GM12878 (cell line): ENCODE measurements at regions of chr10 and their contacts with region 1.

Region 1: GRCh38 chr10:122342293-122343134 is 32.0 kb upstream of the PLEKHA1 start:
- DNase-seq: no peak
- ATAC-seq: peak; percentile 74
- H3K4me3 ChIP-seq: no peak overlapping the region
- H3K27ac ChIP-seq: no peak overlapping the region
- H3K4me1 ChIP-seq: no peaks in the 10 kb centered on the region; the same call in 1 of the 2 replicates
- H3K27me3 ChIP-seq: peaks cover 0 to 6% of the 10 kb centered on the region in 2 experiments; a peak in 2 of 4 replicates
- CTCF ChIP-seq: peak; percentile 58 to 63 (median 62)
- EP300 ChIP-seq: no peak
- POLR2A ChIP-seq: no peak
- RAD21 ChIP-seq: peak; percentile 70

Region 2: GRCh38 chr10:122078965-122079795 is 263.3 kb before region 1 on chr10:
- CTCF ChIA-PET with region 1: no interaction called
- POLR2A ChIA-PET with region 1: no interaction called
- RAD21 ChIA-PET with region 1: no interaction called
- SMC1A ChIA-PET with region 1: no interaction called
- in situ Hi-C with region 1: no loop called
- intact Hi-C with region 1: no loop called
- DNase-seq: no peak
- ATAC-seq: no peak
- H3K4me3 ChIP-seq: no peak overlapping the region
- H3K27ac ChIP-seq: no peak overlapping the region
- H3K4me1 ChIP-seq: no peaks in the 10 kb centered on the region
- H3K27me3 ChIP-seq: no peaks in the 10 kb centered on the region; a peak in 1 of 4 replicates
- CTCF ChIP-seq: no peak
- EP300 ChIP-seq: no peak
- POLR2A ChIP-seq: no peak
- RAD21 ChIP-seq: no peak

Region 3: GRCh38 chr10:122426829-122427228 is 84.3 kb after region 1 on chr10:
- CTCF ChIA-PET with region 1: interaction called, 91 read pairs
- POLR2A ChIA-PET with region 1: interaction called, 4 read pairs
- RAD21 ChIA-PET with region 1: interaction called, 3 read pairs
- SMC1A ChIA-PET with region 1: interaction called, 5 read pairs
- in situ Hi-C with region 1: loop called (anchors 5 kb)
- intact Hi-C with region 1: no loop called
- DNase-seq: no peak
- ATAC-seq: no peak
- H3K4me3 ChIP-seq: no peak overlapping the region
- H3K27ac ChIP-seq: no peak overlapping the region
- H3K4me1 ChIP-seq: no peaks in the 10 kb centered on the region
- H3K27me3 ChIP-seq: no peaks in the 10 kb centered on the region
- CTCF ChIP-seq: no peak
- EP300 ChIP-seq: no peak
- POLR2A ChIP-seq: no peak
- RAD21 ChIP-seq: no peak